ENCODE measurements at regions of chr10 and their contacts with region 1.

Region 1: GRCh38 chr10:89278034-89278535 is 23.8 kb upstream of the IFIT2 start:
- DNase-seq: peak; percentile 98
- H3K4me3 ChIP-seq: no peak overlapping the region
- H3K27ac ChIP-seq: peak overlapping the region; percentile 86
- H3K4me1 ChIP-seq: peaks cover 41% of the 10 kb centered on the region
- H3K27me3 ChIP-seq: no peaks in the 10 kb centered on the region
- CTCF ChIP-seq: no peak

Region 2: GRCh38 chr10:89327784-89328441 is 49.8 kb after region 1 on chr10 and contains the start of gene IFIT3:
- CTCF ChIA-PET with region 1: no interaction called
- dilution Hi-C with region 1: no loop called
- in situ Hi-C with region 1: no loop called
- intact Hi-C with region 1: loop called (anchors 2 kb)
- DNase-seq: peak; percentile 67
- H3K4me3 ChIP-seq: peak within 1 kb of the TSS; percentile 39 to 47 (median 40)
- H3K27ac ChIP-seq: peak within 1 kb of the TSS; percentile 72
- H3K4me1 ChIP-seq: peaks cover 23% of the 10 kb centered on the region
- H3K27me3 ChIP-seq: no peaks in the 10 kb centered on the region
- CTCF ChIP-seq: no peak
- total RNA-seq, gene IFIT3: 2.5 to 3.6 TPM

Region 3: DNA sequence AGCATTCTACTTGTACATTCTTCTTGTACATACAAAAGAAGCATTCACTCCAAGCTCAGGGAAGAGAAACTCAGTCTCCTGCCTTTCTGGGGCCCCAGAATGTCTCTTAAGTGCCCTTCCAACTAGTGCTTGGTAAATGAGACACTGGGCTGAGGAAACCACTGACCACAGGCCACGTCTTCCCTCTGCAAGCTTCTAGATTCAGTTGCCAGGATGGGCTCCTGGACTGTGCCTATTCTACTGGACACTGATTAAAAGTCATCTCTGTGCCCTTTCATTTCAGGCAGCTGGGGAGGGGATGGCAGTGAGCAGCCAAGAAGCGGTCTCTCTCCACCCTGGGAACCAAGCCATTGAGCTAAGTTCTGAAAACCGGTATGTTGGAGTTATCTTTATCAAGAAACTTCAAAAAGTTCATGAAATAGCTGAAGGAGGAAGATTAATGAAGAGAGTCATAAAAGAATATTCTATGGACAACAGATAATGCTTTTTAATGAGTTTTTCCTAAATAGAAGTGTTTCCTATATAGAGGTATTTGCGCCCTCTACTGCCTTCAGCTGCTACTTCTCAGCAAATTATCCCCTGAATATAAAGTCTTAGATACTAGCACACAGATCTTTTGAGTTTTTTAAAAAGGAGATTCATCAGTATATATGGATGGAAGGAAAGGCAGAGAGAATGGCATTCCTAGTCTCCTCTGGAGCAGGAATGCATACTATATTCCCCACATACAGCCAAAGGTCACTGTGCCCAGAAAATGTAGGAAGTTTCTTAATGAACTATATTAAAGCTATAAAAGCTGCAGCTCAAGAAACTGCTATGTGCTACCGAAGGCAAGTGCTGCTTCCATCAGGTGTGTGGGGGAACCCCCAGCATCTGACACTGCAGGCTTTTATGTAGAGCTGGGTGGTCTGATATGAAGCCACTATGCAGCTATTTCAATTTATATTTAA is 91.3 kb after region 1 on chr10:
- CTCF ChIA-PET with region 1: no interaction called
- dilution Hi-C with region 1: loop called (anchors 5 kb)
- in situ Hi-C with region 1: no loop called
- intact Hi-C with region 1: no loop called
- DNase-seq: no peak
- H3K4me3 ChIP-seq: no peak overlapping the region
- H3K27ac ChIP-seq: no peak overlapping the region
- H3K4me1 ChIP-seq: peaks cover 9% of the 10 kb centered on the region
- H3K27me3 ChIP-seq: no peaks in the 10 kb centered on the region
- CTCF ChIP-seq: peak; percentile 44 to 60